Ascending aorta (tissue), 2 donors: ENCODE measurements at regions of chr3 and their contacts with region 1.

Region 1: DNA sequence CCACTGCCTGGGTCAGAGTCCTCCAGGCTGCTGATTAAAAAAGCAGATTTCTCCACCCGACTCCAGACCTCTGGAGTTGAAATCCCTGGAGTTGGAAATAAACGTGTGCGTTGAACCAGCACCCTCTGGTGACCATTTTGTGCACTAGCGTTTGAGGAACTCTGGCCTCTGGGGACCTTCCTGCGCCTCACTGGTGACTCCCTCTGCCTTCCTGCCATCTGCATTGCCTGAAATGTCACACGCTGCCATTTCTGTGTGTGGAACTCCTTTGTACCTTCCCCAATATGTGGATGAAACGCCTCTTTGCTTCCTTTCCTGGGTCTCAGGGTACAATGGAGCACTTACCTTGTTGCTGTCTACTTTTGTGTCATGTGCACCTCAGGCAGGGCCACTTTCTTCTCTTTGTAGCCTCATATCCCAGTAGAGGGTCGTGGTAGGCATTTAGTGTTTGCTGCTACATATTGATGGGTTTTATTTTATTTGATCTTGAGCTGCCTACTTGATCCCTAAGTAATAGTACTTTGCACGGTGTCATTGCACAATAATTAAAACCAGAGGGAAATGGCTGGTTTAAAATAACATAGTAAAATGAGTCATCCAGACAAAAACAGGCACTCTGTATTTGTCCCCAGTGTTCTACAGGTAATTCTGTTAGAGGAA is 56.8 kb downstream of the GPR171 start:
- DNase-seq: peak in 1 of 2 donors; percentile 85
- H3K4me3 ChIP-seq: no peak overlapping the region
- H3K27ac ChIP-seq: peak overlapping the region in 1 of 2 donors; percentile 23
- H3K4me1 ChIP-seq: peaks cover 0 to 4% of the 10 kb centered on the region in 2 donors
- H3K27me3 ChIP-seq: no peaks in the 10 kb centered on the region
- CTCF ChIP-seq: peak; percentile 79 to 88 (median 82)

Region 2: DNA sequence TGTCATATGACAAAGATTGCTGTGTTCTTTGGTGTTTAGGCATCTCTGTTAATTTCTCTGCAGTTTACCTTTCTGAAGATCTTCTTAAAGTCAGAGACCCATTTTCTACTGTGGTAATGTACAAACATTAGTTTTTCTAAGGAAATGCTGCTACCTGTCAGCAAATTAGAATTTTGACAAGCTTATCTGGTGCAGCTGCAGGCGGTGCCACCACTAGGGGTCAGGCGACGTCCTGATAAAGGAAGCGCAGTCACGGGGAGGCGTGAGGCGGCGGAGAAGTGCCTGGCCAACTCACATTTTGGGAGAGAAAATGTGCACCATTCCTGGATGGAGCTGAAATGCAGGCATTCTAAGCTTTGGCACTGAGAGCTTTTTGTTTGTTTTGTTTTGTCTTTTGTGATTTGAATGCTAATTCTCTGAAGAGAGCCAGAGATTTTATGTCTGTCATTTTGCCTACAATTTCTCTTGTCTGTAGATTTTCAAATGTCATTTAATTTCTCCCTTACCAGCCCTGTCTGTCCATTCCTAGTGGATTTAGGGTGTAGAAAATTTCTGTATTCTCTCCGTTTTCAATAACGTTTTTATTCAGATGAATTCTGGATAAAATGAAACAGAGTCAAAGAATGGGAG is 358.3 kb before region 1 on chr3:
- intact Hi-C with region 1: loop called (anchors 1 kb)
- DNase-seq: peak in 1 of 2 donors; percentile 86
- H3K4me3 ChIP-seq: no peak overlapping the region
- H3K27ac ChIP-seq: no peak overlapping the region
- H3K4me1 ChIP-seq: no peaks in the 10 kb centered on the region
- H3K27me3 ChIP-seq: no peaks in the 10 kb centered on the region
- CTCF ChIP-seq: peak; percentile 67 to 87 (median 80)

Region 3: GRCh38 chr3:150870396-150870795 is 275.8 kb before region 1 on chr3:
- intact Hi-C with region 1: loop called (anchors 10 kb)
- DNase-seq: no peak
- H3K4me3 ChIP-seq: no peak overlapping the region
- H3K27ac ChIP-seq: no peak overlapping the region
- H3K4me1 ChIP-seq: no peaks in the 10 kb centered on the region
- H3K27me3 ChIP-seq: no peaks in the 10 kb centered on the region
- CTCF ChIP-seq: no peak

Region 4: DNA sequence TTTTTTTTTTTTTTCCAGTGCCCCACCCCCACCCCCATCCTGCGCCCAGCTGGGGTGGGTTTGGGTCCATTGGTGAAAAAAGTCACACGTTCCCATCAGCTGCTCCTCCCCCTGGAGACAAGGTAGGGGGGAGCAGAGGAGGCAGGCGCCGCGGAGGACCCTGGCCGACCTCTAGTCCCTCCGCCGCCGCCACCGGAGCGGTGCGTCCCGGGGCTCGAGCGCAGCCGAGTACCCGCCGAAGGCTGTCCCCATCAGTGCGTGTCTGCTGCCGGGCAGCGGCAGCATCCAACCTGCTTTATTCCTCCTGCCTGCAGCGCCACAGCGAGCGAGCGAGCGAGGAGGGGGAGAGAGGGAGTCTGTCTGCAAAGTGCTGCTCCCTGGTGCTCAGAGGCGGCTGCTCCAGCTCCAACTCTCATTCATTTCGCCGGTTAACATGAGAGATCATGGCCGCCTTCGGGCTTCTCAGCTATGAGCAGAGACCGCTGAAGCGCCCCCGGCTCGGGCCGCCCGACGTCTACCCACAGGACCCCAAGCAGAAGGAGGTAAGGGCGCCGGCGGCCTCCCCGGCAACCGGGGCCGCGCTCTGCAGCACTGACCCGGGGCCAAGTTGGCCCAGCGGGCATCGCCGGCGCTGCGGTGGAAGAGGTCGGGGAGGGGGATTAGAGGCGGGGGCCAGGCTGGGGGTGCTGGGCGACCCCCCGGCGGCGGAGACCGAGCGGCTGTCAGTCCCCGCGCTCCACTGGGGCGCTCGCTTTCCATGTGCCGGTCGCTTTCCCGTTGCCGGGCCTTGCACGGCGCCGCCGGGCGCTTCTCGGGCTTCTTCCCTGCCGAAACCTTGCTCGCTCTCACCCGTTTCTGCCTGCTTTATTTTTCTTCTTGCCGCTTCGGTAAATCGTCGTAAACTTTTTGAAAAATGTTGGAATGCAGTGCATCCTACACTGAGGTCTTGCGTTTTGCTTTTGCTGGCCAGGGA is 59.4 kb before region 1 on chr3:
- intact Hi-C with region 1: loop called (anchors 2 kb)
- DNase-seq: peak in 1 of 2 donors; percentile 82
- H3K4me3 ChIP-seq: peak overlapping the region; percentile 65 to 67
- H3K27ac ChIP-seq: peak overlapping the region in 1 of 2 donors; percentile 62
- H3K4me1 ChIP-seq: no peaks in the 10 kb centered on the region
- H3K27me3 ChIP-seq: no peaks in the 10 kb centered on the region
- CTCF ChIP-seq: peak; percentile 14 to 53 (median 20)